PC-9 (cell line): ENCODE measurements at regions of chr13 and their contacts with region 1.

Region 1: DNA sequence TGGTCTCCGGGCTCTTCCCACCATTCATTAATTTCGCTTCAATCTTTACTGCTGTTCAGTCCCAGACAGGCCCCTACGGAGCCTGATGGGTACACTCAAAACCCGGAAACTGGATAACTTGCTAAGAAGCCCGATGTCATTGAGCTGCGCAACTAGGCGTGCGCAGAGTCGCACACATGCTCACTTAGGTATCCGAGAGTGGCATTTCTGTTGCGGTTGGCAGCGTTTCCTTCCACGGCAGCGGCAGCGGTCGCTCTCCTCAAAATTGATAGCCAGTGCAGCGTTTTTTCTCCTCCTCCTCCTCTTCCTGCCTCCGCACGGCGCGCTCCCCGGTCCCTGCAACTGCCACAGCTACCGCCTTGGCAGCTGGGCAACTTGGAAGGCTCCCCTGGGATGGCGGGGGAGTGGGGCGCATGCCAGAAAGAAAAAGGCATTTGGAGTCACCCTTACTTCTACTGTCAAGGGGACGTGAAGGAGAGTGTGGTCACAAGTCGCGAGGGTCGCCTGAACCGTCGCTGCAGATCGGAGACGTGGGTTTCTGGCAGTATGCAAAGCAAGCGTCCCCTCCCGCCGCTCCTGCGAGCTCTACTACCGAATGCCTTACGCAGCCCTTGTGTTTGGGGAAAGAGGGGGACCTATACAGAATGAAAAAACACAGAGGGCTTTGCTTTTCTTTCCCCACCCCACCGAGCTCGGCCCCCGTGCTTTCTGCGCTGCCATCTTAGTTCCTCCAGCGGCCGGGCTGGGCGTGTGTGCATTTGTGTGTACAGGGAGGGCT is 2.4 kb upstream of the MYCBP2 start:
- DNase-seq: peak; percentile 78 to 88
- H3K4me3 ChIP-seq: peak overlapping the region; percentile 74
- H3K27ac ChIP-seq: peak overlapping the region; percentile 39
- H3K4me1 ChIP-seq: peaks cover 36% of the 10 kb centered on the region
- H3K27me3 ChIP-seq: no peaks in the 10 kb centered on the region
- CTCF ChIP-seq: no peak

Region 2: DNA sequence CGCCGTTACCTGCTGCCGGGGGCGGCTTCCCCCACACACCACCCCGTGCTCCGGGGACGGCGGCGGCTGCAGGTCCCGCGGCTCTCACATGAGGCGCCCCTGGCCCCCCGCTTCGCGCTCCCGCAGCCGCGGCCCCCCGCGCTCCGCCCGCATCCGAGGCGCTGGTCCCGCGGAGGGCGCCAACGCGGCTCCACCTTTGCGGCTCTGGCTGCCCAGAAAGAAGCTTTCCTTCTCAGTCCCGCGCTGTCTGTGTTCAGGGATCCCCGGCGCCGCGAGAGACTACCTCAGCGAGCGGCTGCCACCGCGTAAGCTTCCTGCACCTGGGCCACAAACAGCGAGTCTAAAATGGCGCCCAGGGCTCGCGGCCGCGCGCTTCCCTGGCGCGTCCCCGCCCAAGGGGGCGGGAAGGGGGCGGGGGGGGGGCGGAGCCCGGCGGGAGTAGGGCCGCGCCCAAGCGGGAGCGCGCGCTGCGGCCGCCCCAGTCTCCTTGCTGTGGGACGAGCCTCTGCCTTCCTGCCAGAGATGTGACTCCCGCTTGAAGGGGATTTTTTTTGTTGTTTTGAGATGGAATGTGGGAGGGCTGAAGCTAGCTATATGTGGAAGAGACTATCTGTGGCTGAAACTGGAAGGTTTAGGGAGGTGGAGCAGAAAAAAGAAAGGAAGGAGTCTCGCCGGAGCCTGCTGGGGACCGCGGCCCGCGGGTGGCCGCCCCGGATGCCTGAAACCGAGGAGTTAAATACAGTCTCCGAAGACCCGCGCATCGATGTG is 302.3 kb before region 1 on chr13 and contains the start of gene FBXL3:
- CTCF ChIA-PET with region 1: no interaction called
- POLR2A ChIA-PET with region 1: no interaction called
- intact Hi-C with region 1: loop called (anchors 2 kb)
- DNase-seq: peak; percentile 75 to 78
- H3K4me3 ChIP-seq: peak within 1 kb of the TSS; percentile 95
- H3K27ac ChIP-seq: peak within 1 kb of the TSS; percentile 89
- H3K4me1 ChIP-seq: peaks cover 45% of the 10 kb centered on the region
- H3K27me3 ChIP-seq: no peaks in the 10 kb centered on the region
- CTCF ChIP-seq: no peak
- total RNA-seq, gene FBXL3: 20.3 and 22.0 TPM in 2 replicates

Region 3: DNA sequence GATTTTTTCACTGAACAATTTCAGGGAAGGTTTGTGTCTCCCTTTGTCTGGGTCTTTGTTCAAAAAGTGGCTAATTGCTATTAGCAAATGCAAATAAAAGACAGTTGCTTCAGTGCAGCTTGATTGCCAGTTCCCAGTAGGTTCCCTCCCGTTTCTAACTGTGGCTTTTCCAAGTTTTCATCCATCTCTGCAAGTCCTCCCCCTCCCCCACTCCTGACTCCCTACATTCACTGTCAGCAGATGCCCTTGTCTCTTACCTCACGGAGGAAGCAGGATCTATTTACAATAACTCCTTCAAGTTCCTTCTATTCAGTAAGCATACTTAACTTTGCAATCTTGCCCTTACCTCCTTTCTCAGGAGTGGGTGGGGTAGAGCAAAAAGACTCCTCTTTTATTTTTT is 150.7 kb after region 1 on chr13:
- CTCF ChIA-PET with region 1: interaction called, 5 read pairs
- POLR2A ChIA-PET with region 1: no interaction called
- intact Hi-C with region 1: loop called (anchors 1 kb)
- DNase-seq: no peak
- H3K4me3 ChIP-seq: no peak overlapping the region
- H3K27ac ChIP-seq: no peak overlapping the region
- H3K4me1 ChIP-seq: peaks cover 11% of the 10 kb centered on the region
- H3K27me3 ChIP-seq: no peaks in the 10 kb centered on the region
- CTCF ChIP-seq: no peak

Region 4: GRCh38 chr13:77521595-77522367 is 192.5 kb after region 1 on chr13:
- CTCF ChIA-PET with region 1: no interaction called
- POLR2A ChIA-PET with region 1: no interaction called
- intact Hi-C with region 1: loop called (anchors 5 kb)
- DNase-seq: peak; percentile 86 to 98
- H3K4me3 ChIP-seq: peak overlapping the region; percentile 35; the same call in 1 of the 2 replicates
- H3K27ac ChIP-seq: peak overlapping the region; percentile 97
- H3K4me1 ChIP-seq: peaks cover 59% of the 10 kb centered on the region
- H3K27me3 ChIP-seq: no peaks in the 10 kb centered on the region
- CTCF ChIP-seq: peak; percentile 22; the same call in 1 of the 2 replicates

Region 5: GRCh38 chr13:77535448-77535847 is 206.1 kb after region 1 on chr13 and contains the start of gene SCEL:
- CTCF ChIA-PET with region 1: no interaction called
- POLR2A ChIA-PET with region 1: no interaction called
- intact Hi-C with region 1: loop called (anchors 5 kb)
- DNase-seq: peak; percentile 65 to 93
- H3K4me3 ChIP-seq: peak within 1 kb of the TSS; percentile 61
- H3K27ac ChIP-seq: peak within 1 kb of the TSS; percentile 92
- H3K4me1 ChIP-seq: peaks cover 61% of the 10 kb centered on the region
- H3K27me3 ChIP-seq: no peaks in the 10 kb centered on the region
- CTCF ChIP-seq: no peak
- total RNA-seq, gene SCEL: 19.5 and 32.5 TPM in 2 replicates

Region 6: GRCh38 chr13:77565635-77566034 is 236.3 kb after region 1 on chr13:
- CTCF ChIA-PET with region 1: no interaction called
- POLR2A ChIA-PET with region 1: no interaction called
- intact Hi-C with region 1: loop called (anchors 1 kb)
- DNase-seq: peak in 1 of 2 experiments; percentile 50
- H3K4me3 ChIP-seq: no peak overlapping the region
- H3K27ac ChIP-seq: no peak overlapping the region
- H3K4me1 ChIP-seq: no peaks in the 10 kb centered on the region; the same call in 1 of the 2 replicates
- H3K27me3 ChIP-seq: no peaks in the 10 kb centered on the region
- CTCF ChIP-seq: peak; percentile 81

Region 7: GRCh38 chr13:77697217-77698103 is 368.1 kb after region 1 on chr13 and contains the start of gene SLAIN1:
- CTCF ChIA-PET with region 1: no interaction called
- POLR2A ChIA-PET with region 1: interaction called, 4 read pairs
- intact Hi-C with region 1: loop called (anchors 10 kb)
- DNase-seq: peak in 1 of 2 experiments; percentile 65
- H3K4me3 ChIP-seq: peak within 1 kb of the TSS; percentile 65
- H3K27ac ChIP-seq: no peak within 1 kb of the TSS
- H3K4me1 ChIP-seq: peaks cover 17% of the 10 kb centered on the region
- H3K27me3 ChIP-seq: no peaks in the 10 kb centered on the region
- CTCF ChIP-seq: no peak
- total RNA-seq, gene SLAIN1: 2.3 and 2.4 TPM in 2 replicates